ENCODE measurements at regions of chr1 and their contacts with region 1.

Region 1: GRCh38 chr1:116485071-116485735 is 85.6 kb downstream of the CD58 start:
- DNase-seq: peak; percentile 51 to 66
- ATAC-seq: peak; percentile 90 to 98
- H3K4me3 ChIP-seq: no peak overlapping the region
- H3K27ac ChIP-seq: peak overlapping the region in 1 of 2 experiments; percentile 55; a peak in 3 of 6 replicates
- H3K4me1 ChIP-seq: 0 out of 3 replicates have a peak, but pooled peaks cover 2% of the 10 kb centered on the region
- CTCF ChIP-seq: peak; percentile 78
- EP300 ChIP-seq: no peak
- POLR2A ChIP-seq: no peak
- RAD21 ChIP-seq: peak; percentile 83 to 85

Region 2: DNA sequence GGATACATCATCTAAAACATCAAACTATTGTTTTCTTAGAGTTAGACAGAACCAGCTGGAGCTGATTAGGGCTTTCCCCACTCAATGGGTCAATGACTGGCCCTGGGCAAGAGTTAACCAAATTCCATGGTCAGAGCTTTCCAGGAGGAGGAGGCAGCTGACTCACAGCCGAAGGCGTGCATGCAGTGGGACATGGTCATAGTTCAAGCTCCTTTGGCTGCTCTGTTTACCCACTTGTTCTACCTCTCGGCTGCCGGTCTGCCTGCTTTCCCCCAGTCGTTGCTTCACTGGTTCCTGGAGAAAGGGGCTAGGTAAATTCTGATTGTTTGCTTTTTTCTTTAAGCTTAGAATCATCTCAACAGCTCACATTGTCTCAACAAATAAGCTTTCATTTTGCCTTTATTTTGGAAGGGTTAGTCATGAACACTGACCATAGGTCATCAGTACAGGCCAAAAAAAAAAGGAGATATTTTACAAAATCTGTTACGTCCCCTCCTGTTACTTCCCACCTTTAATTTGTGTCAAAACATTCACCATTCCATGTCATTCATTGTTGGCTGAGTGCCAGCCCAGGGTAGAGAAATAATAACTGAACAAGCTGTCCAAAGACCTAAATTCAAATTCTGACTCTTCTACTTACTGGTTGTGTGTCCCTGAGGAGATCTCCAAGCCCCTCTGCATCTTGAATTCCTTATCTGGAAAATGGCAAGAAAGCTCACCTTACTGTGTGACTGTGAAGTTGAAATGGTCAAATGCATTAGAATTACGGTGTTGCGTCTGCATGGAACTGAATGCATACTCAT is 362.0 kb before region 1 on chr1:
- CTCF ChIA-PET with region 1: interaction called, 16 read pairs
- POLR2A ChIA-PET with region 1: no interaction called
- DNase-seq: peak in 1 of 2 experiments; percentile 45
- ATAC-seq: peak; percentile 78 to 89; a peak in 5 of 6 replicates
- H3K4me3 ChIP-seq: no peak overlapping the region
- H3K27ac ChIP-seq: peak overlapping the region; percentile 38 to 56; a peak in 5 of 6 replicates
- H3K4me1 ChIP-seq: peaks cover 22% of the 10 kb centered on the region
- CTCF ChIP-seq: no peak
- EP300 ChIP-seq: no peak
- POLR2A ChIP-seq: no peak
- RAD21 ChIP-seq: no peak

Region 3: GRCh38 chr1:116151739-116152576 is 333.2 kb before region 1 on chr1:
- CTCF ChIA-PET with region 1: interaction called, 73 read pairs
- POLR2A ChIA-PET with region 1: no interaction called
- DNase-seq: peak; percentile 54 to 77
- ATAC-seq: peak; percentile 98 to 100
- H3K4me3 ChIP-seq: peak overlapping the region; percentile 43
- H3K27ac ChIP-seq: peak overlapping the region; percentile 80 to 93
- H3K4me1 ChIP-seq: peaks cover 10% of the 10 kb centered on the region
- CTCF ChIP-seq: peak; percentile 75
- EP300 ChIP-seq: no peak
- POLR2A ChIP-seq: peak; percentile 21; the same call in 1 of the 2 replicates
- RAD21 ChIP-seq: peak; percentile 44 to 69

Region 4: GRCh38 chr1:116409751-116410191 is 75.4 kb before region 1 on chr1:
- CTCF ChIA-PET with region 1: interaction called, 10 read pairs
- POLR2A ChIA-PET with region 1: no interaction called
- DNase-seq: no peak
- ATAC-seq: no peak
- H3K4me3 ChIP-seq: no peak overlapping the region
- H3K27ac ChIP-seq: no peak overlapping the region
- H3K4me1 ChIP-seq: no peaks in the 10 kb centered on the region
- CTCF ChIP-seq: no peak
- EP300 ChIP-seq: no peak
- POLR2A ChIP-seq: no peak
- RAD21 ChIP-seq: no peak

Region 5: GRCh38 chr1:116465845-116466685 is 19.1 kb before region 1 on chr1:
- CTCF ChIA-PET with region 1: interaction called, 13 read pairs
- POLR2A ChIA-PET with region 1: no interaction called
- DNase-seq: no peak
- ATAC-seq: no peak
- H3K4me3 ChIP-seq: no peak overlapping the region
- H3K27ac ChIP-seq: no peak overlapping the region
- H3K4me1 ChIP-seq: peaks cover under 1% of the 10 kb centered on the region; the same call in 2 of the 3 replicates
- CTCF ChIP-seq: no peak
- EP300 ChIP-seq: no peak
- POLR2A ChIP-seq: no peak
- RAD21 ChIP-seq: no peak

Region 6: GRCh38 chr1:116498789-116499628 is 13.8 kb after region 1 on chr1:
- CTCF ChIA-PET with region 1: interaction called, 125 read pairs
- POLR2A ChIA-PET with region 1: no interaction called
- DNase-seq: peak; percentile 41 to 51
- ATAC-seq: peak; percentile 81 to 92
- H3K4me3 ChIP-seq: no peak overlapping the region
- H3K27ac ChIP-seq: peak overlapping the region in 1 of 2 experiments; percentile 64; a peak in 2 of 6 replicates
- H3K4me1 ChIP-seq: peaks cover 19% of the 10 kb centered on the region; the same call in 2 of the 3 replicates
- CTCF ChIP-seq: peak; percentile 65
- EP300 ChIP-seq: no peak
- POLR2A ChIP-seq: no peak
- RAD21 ChIP-seq: peak; percentile 81 to 82

Region 7: GRCh38 chr1:116628448-116628847 is 143.2 kb after region 1 on chr1:
- CTCF ChIA-PET with region 1: no interaction called
- POLR2A ChIA-PET with region 1: no interaction called
- DNase-seq: no peak
- ATAC-seq: no peak
- H3K4me3 ChIP-seq: no peak overlapping the region
- H3K27ac ChIP-seq: no peak overlapping the region
- H3K4me1 ChIP-seq: peaks cover 13% of the 10 kb centered on the region; the same call in 1 of the 3 replicates
- CTCF ChIP-seq: no peak
- EP300 ChIP-seq: no peak
- POLR2A ChIP-seq: no peak
- RAD21 ChIP-seq: no peak

Measured in A549 (cell line).